ENCODE measurements at regions of chr3 and their contacts with region 1.

Region 1: DNA sequence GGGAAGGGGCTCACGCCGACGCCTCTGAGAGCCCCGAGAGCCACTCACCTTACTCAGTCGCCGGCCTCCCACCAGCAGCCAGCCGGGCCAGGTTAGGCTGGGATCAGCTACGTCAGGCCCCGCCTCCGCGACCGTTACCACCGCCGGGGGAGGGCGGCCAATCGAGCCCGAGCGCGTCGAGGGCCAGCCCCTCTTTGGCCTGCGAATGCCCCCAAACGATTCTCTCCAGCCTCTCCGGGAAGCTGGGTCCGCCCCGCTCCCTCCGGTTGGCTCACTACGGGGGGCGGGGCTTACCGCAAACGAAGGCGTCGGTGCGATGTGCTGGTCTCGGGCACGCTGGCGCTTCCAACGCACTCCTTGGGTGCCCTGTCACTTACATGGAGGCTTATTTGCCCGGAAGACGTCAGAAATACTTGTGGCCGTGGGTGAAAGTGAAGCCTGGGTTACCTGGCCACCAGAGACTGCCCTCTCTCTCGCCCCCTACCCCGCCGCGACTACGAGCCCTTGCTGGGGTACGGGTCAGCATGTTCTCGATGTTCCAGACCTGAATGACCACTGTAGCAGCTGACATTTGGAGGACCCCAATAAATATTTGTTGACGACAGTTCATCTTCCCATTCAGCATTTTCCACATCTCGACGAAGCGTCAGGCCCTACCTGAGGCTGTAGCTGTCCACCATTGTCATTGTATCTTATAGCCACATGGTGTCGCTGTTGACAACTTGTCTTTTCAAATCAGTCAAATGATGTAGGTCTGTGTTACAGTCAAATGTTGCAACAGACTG is at the start of gene CEP70:
- DNase-seq: peak; percentile 93
- ATAC-seq: peak; percentile 93
- H3K4me3 Mint-ChIP-seq: peak within 1 kb of the TSS; percentile 82
- H3K27ac Mint-ChIP-seq: peak within 1 kb of the TSS; percentile 91
- H3K4me1 Mint-ChIP-seq: peaks cover 8% of the 10 kb centered on the region
- H3K27me3 Mint-ChIP-seq: no peaks in the 10 kb centered on the region
- total RNA-seq, gene CEP70: 9.3 to 11.4 TPM

Region 2: GRCh38 chr3:138186803-138187295 is 407.5 kb before region 1 on chr3:
- CTCF ChIA-PET with region 1: no interaction called
- POLR2A ChIA-PET with region 1: no interaction called
- intact Hi-C with region 1: loop called (anchors 1 to 10 kb)
- DNase-seq: peak; percentile 94
- ATAC-seq: peak; percentile 96
- H3K4me3 Mint-ChIP-seq: peak overlapping the region; percentile 81
- H3K27ac Mint-ChIP-seq: peak overlapping the region; percentile 93
- H3K4me1 Mint-ChIP-seq: peaks cover 28% of the 10 kb centered on the region
- H3K27me3 Mint-ChIP-seq: peaks cover 3% of the 10 kb centered on the region

Region 3: GRCh38 chr3:138479438-138479863 is 114.9 kb before region 1 on chr3:
- CTCF ChIA-PET with region 1: interaction called, 11 read pairs
- POLR2A ChIA-PET with region 1: no interaction called
- intact Hi-C with region 1: loop called in 1 of 2 experiments (anchors 1 kb)
- DNase-seq: peak; percentile 65
- ATAC-seq: peak; percentile 42
- H3K4me3 Mint-ChIP-seq: no peak overlapping the region
- H3K27ac Mint-ChIP-seq: no peak overlapping the region
- H3K4me1 Mint-ChIP-seq: no peaks in the 10 kb centered on the region
- H3K27me3 Mint-ChIP-seq: peaks cover 9% of the 10 kb centered on the region

Region 4: GRCh38 chr3:138694287-138695007 is 100.1 kb after region 1 on chr3:
- CTCF ChIA-PET with region 1: interaction called, 8 read pairs
- POLR2A ChIA-PET with region 1: no interaction called
- intact Hi-C with region 1: loop called (anchors 1 to 5 kb)
- DNase-seq: no peak
- ATAC-seq: no peak
- H3K4me3 Mint-ChIP-seq: no peak overlapping the region
- H3K27ac Mint-ChIP-seq: no peak overlapping the region
- H3K4me1 Mint-ChIP-seq: no peaks in the 10 kb centered on the region
- H3K27me3 Mint-ChIP-seq: no peaks in the 10 kb centered on the region

Region 5: DNA sequence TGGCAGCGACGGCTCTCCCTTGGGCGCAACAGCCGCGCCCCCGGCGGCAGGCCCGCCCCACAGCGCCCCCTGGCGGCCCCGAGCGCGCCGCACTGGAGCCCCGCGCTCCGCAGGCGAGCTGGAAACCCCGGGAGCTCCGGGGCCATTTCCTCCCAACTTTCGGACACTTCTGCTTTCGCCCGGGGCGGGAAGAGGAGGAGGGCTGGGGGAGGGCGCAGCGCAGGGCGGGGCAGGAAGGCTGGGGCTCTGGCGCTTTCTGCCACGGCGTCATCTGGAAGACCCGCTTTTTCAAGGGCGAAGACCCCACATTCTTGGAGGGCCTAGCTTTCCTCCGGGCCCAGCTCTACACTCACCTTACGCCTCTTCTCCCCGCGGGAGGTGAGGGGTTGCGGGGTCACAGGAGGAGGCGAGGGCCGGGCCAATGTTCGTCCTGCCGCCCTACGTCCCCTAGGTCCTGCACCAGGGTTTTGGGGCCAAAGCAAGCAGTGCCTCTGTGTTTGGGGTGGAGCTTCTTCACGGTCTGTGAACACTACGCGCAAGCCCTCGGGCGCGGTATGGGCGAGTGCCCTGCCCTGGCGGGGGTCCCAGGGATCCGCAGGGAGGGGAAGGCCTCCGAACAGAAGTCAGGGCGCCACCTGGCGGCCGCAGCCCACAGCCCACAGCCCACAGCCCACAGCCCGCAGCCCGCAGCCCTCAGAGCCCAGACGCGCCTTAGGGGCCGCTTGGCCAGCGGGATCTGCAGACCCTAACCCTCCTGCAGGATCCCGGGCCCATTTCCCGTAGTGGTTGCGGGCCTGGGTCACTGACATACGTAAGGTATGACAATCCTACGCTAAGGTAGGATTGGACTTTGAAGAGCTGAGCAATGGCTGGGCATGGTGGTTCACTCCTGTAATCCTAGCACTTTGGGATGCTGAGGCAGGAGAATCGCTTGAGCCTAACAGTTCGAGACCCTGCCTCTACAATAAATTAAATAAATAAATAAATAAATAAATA is 321.5 kb after region 1 on chr3:
- CTCF ChIA-PET with region 1: interaction called, 75 read pairs
- POLR2A ChIA-PET with region 1: interaction called, 7 read pairs
- intact Hi-C with region 1: loop called (anchors 1 kb)
- DNase-seq: peak; percentile 93
- ATAC-seq: peak; percentile 89
- H3K4me3 Mint-ChIP-seq: peak overlapping the region; percentile 76
- H3K27ac Mint-ChIP-seq: peak overlapping the region; percentile 73
- H3K4me1 Mint-ChIP-seq: peaks cover 5% of the 10 kb centered on the region
- H3K27me3 Mint-ChIP-seq: peaks cover 2% of the 10 kb centered on the region

Region 6: DNA sequence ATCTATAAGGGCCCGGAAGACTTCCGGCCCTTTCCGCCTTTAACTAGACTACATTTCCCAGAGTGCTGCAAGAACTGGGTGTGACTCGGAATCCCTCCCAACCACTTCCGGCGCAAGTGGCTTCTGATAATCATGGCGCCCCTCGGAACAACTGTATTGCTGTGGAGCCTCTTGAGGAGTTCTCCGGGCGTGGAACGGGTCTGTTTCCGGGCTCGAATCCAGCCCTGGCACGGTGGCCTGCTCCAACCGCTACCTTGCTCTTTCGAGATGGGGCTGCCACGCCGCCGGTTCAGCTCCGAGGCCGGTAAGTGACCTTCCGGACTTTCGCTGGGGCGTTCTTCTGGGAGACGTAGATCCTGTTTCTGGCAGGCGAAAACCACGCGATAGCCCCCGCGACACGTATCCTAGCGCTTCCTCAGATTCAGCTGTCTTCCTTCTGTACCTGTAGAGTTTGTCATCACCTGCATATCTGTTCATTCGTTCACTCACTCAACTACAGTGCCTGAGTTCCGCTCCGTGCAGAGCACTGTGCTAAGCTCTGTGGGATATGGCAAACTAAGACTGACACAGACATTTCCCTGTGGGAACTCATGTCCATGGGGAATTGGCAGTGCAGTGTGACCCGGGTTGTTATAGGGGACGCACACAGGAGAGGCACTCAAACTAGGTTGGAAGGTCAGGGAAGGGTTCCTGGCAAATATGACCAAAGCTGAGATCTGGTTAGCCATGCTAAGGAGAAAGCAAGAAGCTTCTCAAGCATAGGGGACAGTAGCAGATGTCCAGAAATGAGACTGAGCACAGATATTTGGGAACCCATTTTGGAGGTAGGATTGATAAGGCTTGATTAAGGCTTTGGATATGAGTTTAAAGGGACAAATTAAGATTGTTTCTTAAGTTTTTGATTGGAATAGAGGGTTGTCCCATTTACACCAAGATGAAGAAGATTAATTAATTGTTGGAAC is 749.8 kb after region 1 on chr3 and contains the start of gene MRPS22:
- CTCF ChIA-PET with region 1: no interaction called
- POLR2A ChIA-PET with region 1: no interaction called
- intact Hi-C with region 1: loop called in 1 of 2 experiments (anchors 1 kb)
- DNase-seq: peak; percentile 90
- ATAC-seq: peak; percentile 97
- H3K4me3 Mint-ChIP-seq: peak within 1 kb of the TSS; percentile 58
- H3K27ac Mint-ChIP-seq: peak within 1 kb of the TSS; percentile 85
- H3K4me1 Mint-ChIP-seq: peaks cover 10% of the 10 kb centered on the region
- H3K27me3 Mint-ChIP-seq: no peaks in the 10 kb centered on the region
- total RNA-seq, gene MRPS22: 72.4 to 80.6 TPM